CD4-positive, alpha-beta memory T cell (primary cell): ENCODE measurements at regions of chr5 and their contacts with region 1.

Region 1: DNA sequence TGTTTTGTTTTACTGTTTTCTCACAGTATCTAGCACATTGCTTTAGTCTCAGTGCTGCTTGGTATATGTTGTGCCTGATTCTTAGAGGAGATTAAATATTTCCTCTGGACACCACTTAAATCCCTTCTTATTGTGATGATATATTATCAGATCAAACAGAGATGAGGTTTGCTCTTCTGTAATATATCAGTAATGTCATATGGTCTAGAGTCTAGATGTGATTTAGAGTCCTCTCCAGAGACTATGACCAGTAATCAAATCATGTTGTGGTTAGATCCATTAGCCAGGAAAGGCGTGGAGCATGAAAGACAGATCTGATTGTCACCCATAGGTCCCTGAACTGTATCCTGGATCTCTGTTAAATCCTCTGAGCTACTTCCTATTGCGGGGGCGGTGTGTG is 24.4 kb downstream of the CAMK4 start:
- DNase-seq: no peak
- H3K4me3 ChIP-seq: no peak overlapping the region
- H3K4me3 Mint-ChIP-seq: peak overlapping the region in 4 of 8 donors; percentile 11 to 59 (median 53)
- H3K27ac ChIP-seq: no peak overlapping the region
- H3K27ac Mint-ChIP-seq: peak overlapping the region; percentile 7 to 81 (median 44)
- H3K4me1 ChIP-seq: peaks cover 78% of the 10 kb centered on the region
- H3K4me1 Mint-ChIP-seq: peaks cover 63 to 80% (median 72%) of the 10 kb centered on the region in 4 donors
- H3K27me3 ChIP-seq: no peaks in the 10 kb centered on the region
- H3K27me3 Mint-ChIP-seq: no peaks in the 10 kb centered on the region

Region 2: DNA sequence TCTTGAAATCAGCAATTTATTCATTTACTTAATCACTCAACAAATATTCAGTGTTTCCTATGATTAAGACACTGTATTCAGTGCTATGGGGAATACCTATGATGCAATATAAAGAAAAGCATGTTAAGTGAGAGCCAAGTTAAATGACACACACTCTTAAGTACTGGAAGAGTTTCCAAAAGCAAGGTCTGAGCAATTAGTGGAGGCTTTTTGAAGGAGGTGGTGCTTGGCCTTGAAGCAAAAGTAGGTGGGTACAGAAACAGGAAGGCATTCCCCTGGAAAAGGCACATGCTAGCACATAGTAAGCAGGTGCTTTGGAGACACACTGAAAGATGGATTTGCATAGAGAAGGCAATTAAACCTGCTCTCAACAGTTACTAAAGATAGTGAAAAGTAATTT is 173.1 kb before region 1 on chr5:
- CTCF ChIA-PET with region 1: no interaction called
- POLR2A ChIA-PET with region 1: no interaction called
- intact Hi-C with region 1: no loop called
- DNase-seq: no peak
- H3K4me3 ChIP-seq: no peak overlapping the region
- H3K4me3 Mint-ChIP-seq: no peak overlapping the region
- H3K27ac ChIP-seq: no peak overlapping the region
- H3K27ac Mint-ChIP-seq: no peak overlapping the region
- H3K4me1 ChIP-seq: peaks cover 22% of the 10 kb centered on the region
- H3K4me1 Mint-ChIP-seq: peaks cover 10 to 27% (median 21%) of the 10 kb centered on the region in 4 donors
- H3K27me3 ChIP-seq: peaks cover 19% of the 10 kb centered on the region
- H3K27me3 Mint-ChIP-seq: peaks cover 43 to 66% of the 10 kb centered on the region in 2 donors

Region 3: DNA sequence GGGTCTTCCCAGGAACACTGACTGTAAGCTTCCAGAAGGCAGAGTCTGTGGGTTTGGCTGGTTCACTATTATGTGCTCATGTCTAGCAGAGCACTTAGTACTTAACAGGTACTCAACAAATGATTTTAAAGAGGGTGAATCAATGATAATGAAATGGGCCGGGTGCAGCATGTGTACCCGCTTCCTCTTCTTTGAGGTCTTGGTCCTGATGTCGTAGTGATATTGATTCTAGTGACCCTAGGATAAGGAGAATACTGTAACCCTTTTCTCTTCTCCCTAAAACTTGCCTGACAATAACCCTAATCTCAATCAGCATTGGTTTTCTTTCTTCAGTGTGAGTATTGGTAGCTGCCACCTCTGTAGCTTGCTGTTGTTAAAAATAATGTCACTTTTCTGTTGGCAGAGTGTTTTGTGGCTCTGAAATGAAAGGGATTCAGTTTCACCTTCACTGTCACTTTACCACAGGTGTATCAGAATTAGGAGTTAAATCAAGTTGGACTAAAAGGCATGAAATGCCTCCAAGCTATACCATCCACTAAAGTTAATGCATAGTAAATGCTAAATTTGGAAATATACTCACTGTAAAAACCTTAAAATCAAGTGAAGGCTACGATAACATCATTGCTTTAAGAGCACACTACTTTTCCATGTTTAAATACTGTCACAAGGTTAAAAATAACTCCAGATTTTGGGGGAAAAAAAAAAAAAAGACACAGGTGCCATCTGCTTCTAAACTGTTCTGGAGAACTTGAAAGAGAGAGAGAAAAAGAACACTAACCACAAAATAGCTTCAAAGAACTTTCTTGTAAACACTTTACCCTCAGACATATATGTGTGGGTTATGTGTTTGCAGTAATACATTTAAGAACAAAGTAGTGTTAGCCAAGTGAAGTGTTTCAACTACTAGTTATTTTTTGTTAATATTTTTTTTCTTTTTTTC is 18.4 kb before region 1 on chr5:
- CTCF ChIA-PET with region 1: interaction called, 27 read pairs
- POLR2A ChIA-PET with region 1: interaction called, 75 read pairs
- intact Hi-C with region 1: no loop called
- DNase-seq: peak in 4 of 5 donors; percentile 69 to 80 (median 74)
- H3K4me3 ChIP-seq: peak overlapping the region in 1 of 2 donors; percentile 25
- H3K4me3 Mint-ChIP-seq: peak overlapping the region; percentile 77 to 94 (median 84)
- H3K27ac ChIP-seq: peak overlapping the region; percentile 82
- H3K27ac Mint-ChIP-seq: peak overlapping the region; percentile 83 to 98 (median 95)
- H3K4me1 ChIP-seq: peaks cover 84% of the 10 kb centered on the region
- H3K4me1 Mint-ChIP-seq: peaks cover 59 to 94% (median 74%) of the 10 kb centered on the region in 4 donors
- H3K27me3 ChIP-seq: no peaks in the 10 kb centered on the region
- H3K27me3 Mint-ChIP-seq: no peaks in the 10 kb centered on the region

Region 4: DNA sequence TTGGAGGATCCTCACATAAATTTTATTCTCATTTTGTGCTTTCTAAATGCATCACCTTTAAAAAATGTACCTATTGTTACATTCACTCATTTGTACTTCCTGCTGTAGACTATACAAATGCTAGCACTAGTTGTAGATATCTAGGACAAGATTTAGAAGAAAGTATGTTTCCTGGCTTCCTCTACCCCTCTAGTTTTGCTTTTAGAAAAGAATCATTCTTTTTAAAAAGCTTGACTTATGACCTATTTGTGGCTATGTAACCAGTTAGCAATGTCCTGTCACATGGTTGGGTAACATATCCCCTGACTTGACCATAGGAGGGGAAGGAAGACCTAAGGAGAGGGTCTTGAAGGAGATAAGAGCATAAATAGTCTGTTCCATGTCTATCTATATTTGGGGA is 11.1 kb before region 1 on chr5:
- CTCF ChIA-PET with region 1: interaction called, 6 read pairs
- POLR2A ChIA-PET with region 1: interaction called, 12 read pairs
- intact Hi-C with region 1: loop called (anchors 2 kb)
- DNase-seq: peak in 1 of 5 donors; percentile 15
- H3K4me3 ChIP-seq: no peak overlapping the region
- H3K4me3 Mint-ChIP-seq: peak overlapping the region; percentile 62 to 89 (median 78)
- H3K27ac ChIP-seq: peak overlapping the region; percentile 54
- H3K27ac Mint-ChIP-seq: peak overlapping the region; percentile 76 to 96 (median 91)
- H3K4me1 ChIP-seq: peaks cover 94% of the 10 kb centered on the region
- H3K4me1 Mint-ChIP-seq: peaks cover 78 to 95% (median 89%) of the 10 kb centered on the region in 4 donors
- H3K27me3 ChIP-seq: no peaks in the 10 kb centered on the region
- H3K27me3 Mint-ChIP-seq: no peaks in the 10 kb centered on the region

Region 5: DNA sequence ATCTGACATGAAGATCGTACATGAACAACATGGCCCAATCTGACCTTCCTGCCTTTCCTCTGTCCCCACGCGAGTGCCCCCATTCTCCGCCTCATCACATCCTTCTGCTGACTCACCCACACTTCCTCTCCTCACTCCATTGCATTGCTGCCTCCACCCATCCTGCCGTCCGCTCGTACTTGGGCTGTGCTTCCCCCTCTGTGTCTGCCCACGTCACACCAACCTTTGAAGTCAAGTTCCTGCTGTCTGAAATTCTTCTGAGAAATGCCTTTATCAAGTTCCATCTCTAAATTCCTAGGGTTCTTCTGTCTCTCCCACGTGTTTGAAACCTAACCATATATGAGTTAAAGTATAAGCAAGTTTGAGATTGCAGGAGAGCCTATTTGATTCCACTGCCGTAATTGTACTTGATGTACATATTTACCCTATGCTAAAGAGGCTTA is 281.7 kb after region 1 on chr5:
- CTCF ChIA-PET with region 1: no interaction called
- POLR2A ChIA-PET with region 1: no interaction called
- intact Hi-C with region 1: no loop called
- DNase-seq: peak; percentile 84 to 98 (median 87)
- H3K4me3 ChIP-seq: peak overlapping the region in 1 of 2 donors; percentile 3
- H3K4me3 Mint-ChIP-seq: peak overlapping the region; percentile 31 to 79 (median 66)
- H3K27ac ChIP-seq: peak overlapping the region; percentile 68
- H3K27ac Mint-ChIP-seq: peak overlapping the region; percentile 76 to 98 (median 89)
- H3K4me1 ChIP-seq: peaks cover 18% of the 10 kb centered on the region
- H3K4me1 Mint-ChIP-seq: peaks cover 13 to 17% (median 15%) of the 10 kb centered on the region in 4 donors
- H3K27me3 ChIP-seq: no peaks in the 10 kb centered on the region
- H3K27me3 Mint-ChIP-seq: peaks cover 0 to 1% of the 10 kb centered on the region in 2 donors